ENCODE measurements at regions of chr1 and their contacts with region 1.

Region 1: GRCh38 chr1:27117733-27118439 is 37.0 kb downstream of the SLC9A1 start:
- DNase-seq: no peak
- ATAC-seq: no peak
- H3K4me3 ChIP-seq: no peak overlapping the region
- H3K27ac ChIP-seq: peak overlapping the region in 1 of 2 donors; percentile 94
- H3K4me1 ChIP-seq: peaks cover 2 to 4% of the 10 kb centered on the region in 2 donors
- H3K27me3 ChIP-seq: no peaks in the 10 kb centered on the region

Region 2: DNA sequence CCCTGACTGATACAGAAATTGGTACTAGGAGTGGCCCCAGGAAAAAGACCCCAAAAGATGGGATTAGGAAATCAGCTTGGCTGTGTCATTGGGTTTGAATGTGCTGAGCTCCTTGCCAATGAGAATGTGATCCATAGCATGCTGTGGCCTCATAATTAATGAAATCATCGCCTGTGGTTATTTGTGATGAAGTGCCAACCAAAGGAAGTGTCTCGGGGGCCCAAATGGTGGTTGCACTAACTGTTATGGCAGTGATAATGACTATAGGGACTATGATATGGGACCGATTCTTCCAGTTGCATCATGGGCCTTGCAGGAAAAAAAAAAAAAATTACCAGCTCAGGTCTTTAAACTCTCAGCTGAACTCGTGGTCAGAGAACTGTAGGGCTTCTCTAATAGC is 306.8 kb before region 1 on chr1:
- intact Hi-C with region 1: no loop called
- DNase-seq: no peak
- ATAC-seq: no peak
- H3K4me3 ChIP-seq: no peak overlapping the region
- H3K27ac ChIP-seq: no peak overlapping the region
- H3K4me1 ChIP-seq: no peaks in the 10 kb centered on the region
- H3K27me3 ChIP-seq: no peaks in the 10 kb centered on the region

Region 3: GRCh38 chr1:26938004-26938658 is 179.8 kb before region 1 on chr1:
- intact Hi-C with region 1: no loop called
- DNase-seq: no peak
- ATAC-seq: no peak
- H3K4me3 ChIP-seq: no peak overlapping the region
- H3K27ac ChIP-seq: no peak overlapping the region
- H3K4me1 ChIP-seq: no peaks in the 10 kb centered on the region
- H3K27me3 ChIP-seq: no peaks in the 10 kb centered on the region

Region 4: GRCh38 chr1:27154991-27155781 is 37.3 kb after region 1 on chr1 and contains the start of gene SLC9A1:
- intact Hi-C with region 1: loop called (anchors 2 kb)
- DNase-seq: peak; percentile 96 to 98
- ATAC-seq: peak; percentile 97
- H3K4me3 ChIP-seq: peak within 1 kb of the TSS; percentile 59 to 82
- H3K27ac ChIP-seq: peak within 1 kb of the TSS; percentile 77 to 78
- H3K4me1 ChIP-seq: no peaks in the 10 kb centered on the region
- H3K27me3 ChIP-seq: no peaks in the 10 kb centered on the region
- total RNA-seq, gene SLC9A1: 17.6 to 24.9 TPM

Measured in aorta (tissue), 5 donors.